ENCODE measurements at regions of chr16 and their contacts with region 1.

Region 1: DNA sequence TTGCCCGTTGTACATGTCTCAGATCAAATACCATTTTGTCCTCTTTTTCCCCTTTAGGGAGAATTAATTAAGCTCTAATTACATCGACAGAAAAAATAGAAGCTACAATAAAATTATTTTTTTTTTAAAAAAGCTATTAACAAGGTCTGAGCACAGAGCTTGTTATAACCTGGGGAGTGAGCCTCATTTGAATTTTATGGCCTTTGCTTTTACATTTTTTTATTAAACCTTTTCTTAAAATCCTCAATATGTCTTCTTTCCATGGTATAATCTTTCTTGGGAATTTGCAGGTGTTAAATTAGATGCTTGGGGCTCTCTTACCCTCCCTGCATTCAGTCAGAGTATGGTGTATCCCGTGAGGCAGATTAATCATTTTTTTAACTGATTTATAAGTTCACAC is 212.5 kb upstream of the XYLT1 start:
- DNase-seq: no peak
- ATAC-seq: no peak
- H3K4me3 ChIP-seq: no peak overlapping the region
- H3K27ac ChIP-seq: no peak overlapping the region
- H3K4me1 ChIP-seq: no peaks in the 10 kb centered on the region
- H3K27me3 ChIP-seq: no peaks in the 10 kb centered on the region
- CTCF ChIP-seq: no peak
- POLR2A ChIP-seq: no peak
- RAD21 ChIP-seq: no peak

Region 2: GRCh38 chr16:17628983-17629382 is 54.3 kb before region 1 on chr16:
- CTCF ChIA-PET with region 1: no interaction called
- POLR2A ChIA-PET with region 1: no interaction called
- dilution Hi-C with region 1: no loop called
- in situ Hi-C with region 1: loop called (anchors 10 kb)
- intact Hi-C with region 1: no loop called
- DNase-seq: no peak
- ATAC-seq: no peak
- H3K4me3 ChIP-seq: no peak overlapping the region
- H3K27ac ChIP-seq: no peak overlapping the region
- H3K4me1 ChIP-seq: no peaks in the 10 kb centered on the region
- H3K27me3 ChIP-seq: no peaks in the 10 kb centered on the region
- CTCF ChIP-seq: no peak
- POLR2A ChIP-seq: no peak
- RAD21 ChIP-seq: no peak

Measured in IMR-90 (cell line).